ENCODE measurements at regions of chr9 and their contacts with region 1.

Region 1: GRCh38 chr9:71901695-71902597 is 9.0 kb downstream of the ABHD17B start:
- DNase-seq: peak; percentile 18 to 56 (median 44)
- H3K4me3 ChIP-seq: peak overlapping the region in 6 of 7 experiments; percentile 28 to 62 (median 51)
- H3K27ac ChIP-seq: peak overlapping the region; percentile 28 to 76
- H3K4me1 ChIP-seq: peaks cover 38 to 85% (median 59%) of the 10 kb centered on the region in 4 experiments
- H3K27me3 ChIP-seq: no peaks in the 10 kb centered on the region

Region 2: GRCh38 chr9:71891557-71892189 is 10.3 kb before region 1 on chr9:
- CTCF ChIA-PET with region 1: interaction called, 10 read pairs
- POLR2A ChIA-PET with region 1: interaction called, 3 read pairs
- DNase-seq: no peak
- H3K4me3 ChIP-seq: no peak overlapping the region
- H3K27ac ChIP-seq: no peak overlapping the region
- H3K4me1 ChIP-seq: peaks cover 37 to 57% (median 40%) of the 10 kb centered on the region in 4 experiments
- H3K27me3 ChIP-seq: no peaks in the 10 kb centered on the region